ENCODE measurements at regions of chr4 and their contacts with region 1.

Region 1: DNA sequence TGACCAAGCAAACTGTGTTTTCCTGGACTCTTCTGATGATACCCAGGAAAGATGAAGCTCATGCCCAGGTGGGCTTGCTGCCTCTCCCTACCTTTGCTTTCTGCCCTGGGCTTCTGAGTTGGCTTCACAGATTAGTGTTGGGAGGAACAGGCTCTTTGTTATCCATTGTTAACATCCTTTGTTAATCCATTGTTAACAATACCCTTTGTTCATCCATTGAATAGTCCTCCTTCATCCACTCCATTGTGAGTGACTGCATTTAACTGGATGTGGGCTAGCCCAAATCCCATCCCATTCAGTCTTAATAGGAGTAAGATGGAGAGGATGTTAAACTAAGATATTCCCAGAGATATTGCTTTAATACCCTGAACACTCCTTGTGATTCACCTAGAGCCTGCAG is 199.0 kb upstream of the LNX1 start:
- DNase-seq: no peak
- H3K4me3 ChIP-seq: no peak overlapping the region
- H3K27ac ChIP-seq: no peak overlapping the region
- H3K4me1 ChIP-seq: peaks cover 0 to 23% (median 9%) of the 10 kb centered on the region in 4 donors
- H3K27me3 ChIP-seq: no peaks in the 10 kb centered on the region
- CTCF ChIP-seq: no peak
- EP300 ChIP-seq: no peak
- POLR2A ChIP-seq: no peak

Region 2: GRCh38 chr4:52343595-52343994 is 1446.7 kb before region 1 on chr4:
- intact Hi-C with region 1: loop called (anchors 10 kb)
- DNase-seq: no peak
- H3K4me3 ChIP-seq: no peak overlapping the region
- H3K27ac ChIP-seq: no peak overlapping the region
- H3K4me1 ChIP-seq: no peaks in the 10 kb centered on the region
- H3K27me3 ChIP-seq: no peaks in the 10 kb centered on the region
- CTCF ChIP-seq: no peak
- EP300 ChIP-seq: no peak
- POLR2A ChIP-seq: no peak

Region 3: DNA sequence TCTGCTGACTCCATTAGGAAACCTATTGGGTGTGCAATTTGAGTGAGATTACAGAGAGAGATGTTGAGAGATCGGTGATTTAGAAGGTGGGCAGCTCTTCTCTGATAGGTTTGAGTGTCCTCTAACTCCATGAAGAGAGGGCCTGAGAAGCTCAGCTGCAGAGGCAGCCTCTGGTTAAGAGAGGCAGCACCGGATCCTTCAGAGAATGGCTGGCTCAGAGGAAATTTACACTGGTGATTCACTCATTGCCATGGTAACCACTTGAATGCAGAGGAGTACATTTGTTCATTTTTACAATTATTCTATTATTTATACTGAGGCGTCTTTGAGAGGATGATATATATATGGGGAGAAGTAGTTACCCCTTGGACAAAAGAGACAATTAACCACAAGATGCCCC is 610.5 kb after region 1 on chr4:
- intact Hi-C with region 1: no loop called
- DNase-seq: no peak
- H3K4me3 ChIP-seq: no peak overlapping the region
- H3K27ac ChIP-seq: no peak overlapping the region
- H3K4me1 ChIP-seq: peaks cover 0 to 8% (median 0%) of the 10 kb centered on the region in 4 donors
- H3K27me3 ChIP-seq: no peaks in the 10 kb centered on the region
- CTCF ChIP-seq: no peak
- EP300 ChIP-seq: no peak
- POLR2A ChIP-seq: no peak